Common myeloid progenitor, CD34-positive (primary cell): ENCODE measurements at regions of chr7 and their contacts with region 1.

Region 1: GRCh38 chr7:101226721-101227120 is 8.8 kb downstream of the ZNHIT1 start:
- DNase-seq: no peak
- H3K4me3 ChIP-seq: no peak overlapping the region
- H3K27ac ChIP-seq: no peak overlapping the region
- H3K4me1 ChIP-seq: peaks cover 0 to 9% (median 3%) of the 10 kb centered on the region in 4 experiments
- H3K27me3 ChIP-seq: no peaks in the 10 kb centered on the region

Region 2: DNA sequence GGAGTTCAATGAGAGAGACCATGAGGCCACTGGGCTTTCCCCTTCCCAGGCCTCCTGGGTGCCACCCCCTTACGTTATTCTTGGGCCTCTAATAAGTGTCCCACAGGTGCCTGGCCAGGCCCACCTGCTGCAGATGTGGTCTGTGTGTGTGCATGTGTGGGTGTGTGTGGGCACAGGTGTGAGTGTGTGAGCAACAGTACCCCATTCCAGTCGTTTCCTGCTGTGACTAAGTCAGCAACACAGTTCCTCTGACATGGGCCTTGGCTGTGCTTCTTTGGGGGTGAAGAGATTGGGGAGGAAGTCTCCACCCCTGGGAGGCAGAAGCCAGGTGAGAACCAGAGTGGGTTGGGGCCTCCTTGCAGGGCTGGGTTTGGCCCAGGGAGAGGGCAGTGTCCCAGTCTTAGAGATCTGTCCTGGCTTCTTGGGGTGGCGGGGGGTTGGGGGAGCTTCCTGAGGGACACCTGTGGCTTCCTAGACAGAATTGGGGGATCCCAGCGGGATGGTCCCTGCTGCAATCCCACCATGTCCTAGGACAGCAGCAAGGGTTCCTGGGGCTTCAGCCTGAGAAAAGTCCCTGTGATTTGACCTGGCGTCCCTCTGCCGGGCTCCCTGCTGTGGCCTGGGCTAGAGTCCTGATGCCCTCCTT is 872.9 kb before region 1 on chr7:
- CTCF ChIA-PET with region 1: no interaction called
- POLR2A ChIA-PET with region 1: no interaction called
- DNase-seq: no peak
- H3K4me3 ChIP-seq: no peak overlapping the region
- H3K27ac ChIP-seq: peak overlapping the region in 1 of 2 experiments; percentile 30
- H3K4me1 ChIP-seq: peaks cover 0 to 5% (median 0%) of the 10 kb centered on the region in 4 experiments
- H3K27me3 ChIP-seq: no peaks in the 10 kb centered on the region

Region 3: DNA sequence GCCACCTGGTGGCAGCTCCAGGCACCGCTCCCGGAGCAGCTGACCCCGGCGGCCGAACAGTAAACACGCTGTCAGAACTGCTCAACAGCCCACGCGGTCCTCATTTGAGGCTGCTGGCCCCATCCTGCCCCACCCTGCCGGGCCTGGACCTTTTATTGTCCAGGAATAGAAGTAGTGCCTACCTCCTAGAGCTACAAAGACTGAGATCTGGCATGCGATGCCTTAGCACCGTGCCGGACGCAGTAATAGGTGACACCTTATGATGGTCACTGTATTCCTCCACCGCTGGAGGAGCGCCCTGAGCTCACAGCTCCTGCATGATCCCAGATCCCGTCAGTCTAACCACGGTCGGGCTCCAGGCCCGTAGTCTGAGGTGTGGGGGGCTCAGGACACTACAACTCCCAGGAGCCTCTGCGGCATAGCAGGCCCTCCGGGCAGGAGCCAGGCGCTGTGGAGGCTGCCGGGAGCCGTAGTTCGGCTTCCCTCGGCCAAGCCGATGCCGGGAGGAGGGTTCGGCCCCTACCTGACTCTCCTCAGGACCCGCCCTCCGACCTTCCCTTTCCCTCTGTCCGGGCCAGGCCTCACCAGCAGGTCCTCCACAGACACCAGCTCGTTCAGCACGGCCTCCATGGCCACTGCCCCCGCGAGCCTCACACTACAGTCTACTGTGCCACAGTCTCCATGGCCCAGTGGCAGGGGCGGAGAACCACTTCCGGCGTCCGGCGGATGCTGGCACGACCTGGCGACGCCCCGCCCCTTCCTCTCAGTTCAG is 17.8 kb after region 1 on chr7 and contains the start of gene FIS1:
- CTCF ChIA-PET with region 1: interaction called, 15 read pairs
- POLR2A ChIA-PET with region 1: no interaction called
- DNase-seq: peak; percentile 89 to 94 (median 92)
- H3K4me3 ChIP-seq: peak within 1 kb of the TSS; percentile 79 to 97 (median 92)
- H3K27ac ChIP-seq: peak within 1 kb of the TSS; percentile 79 to 90
- H3K4me1 ChIP-seq: peaks cover 0 to 52% (median 46%) of the 10 kb centered on the region in 4 experiments
- H3K27me3 ChIP-seq: no peaks in the 10 kb centered on the region